Left ventricle myocardium inferior (tissue), 1 donor: ENCODE measurements at regions of chr1 and their contacts with region 1.

Region 1: GRCh38 chr1:172089768-172090510 is 248.6 kb downstream of the DNM3 start:
- DNase-seq: peak; percentile 40
- H3K4me3 ChIP-seq: no peak overlapping the region
- H3K27ac ChIP-seq: no peak overlapping the region
- H3K4me1 ChIP-seq: no peaks in the 10 kb centered on the region
- H3K27me3 ChIP-seq: no peaks in the 10 kb centered on the region
- CTCF ChIP-seq: peak; percentile 80

Region 2: GRCh38 chr1:172401892-172402291 is 312.0 kb after region 1 on chr1:
- intact Hi-C with region 1: loop called (anchors 10 kb)
- DNase-seq: no peak
- H3K4me3 ChIP-seq: no peak overlapping the region
- H3K27ac ChIP-seq: no peak overlapping the region
- H3K4me1 ChIP-seq: peaks cover 48% of the 10 kb centered on the region
- H3K27me3 ChIP-seq: no peaks in the 10 kb centered on the region
- CTCF ChIP-seq: no peak